MCF 10A (cell line): ENCODE measurements at regions of chr5 and their contacts with region 1.

Region 1: DNA sequence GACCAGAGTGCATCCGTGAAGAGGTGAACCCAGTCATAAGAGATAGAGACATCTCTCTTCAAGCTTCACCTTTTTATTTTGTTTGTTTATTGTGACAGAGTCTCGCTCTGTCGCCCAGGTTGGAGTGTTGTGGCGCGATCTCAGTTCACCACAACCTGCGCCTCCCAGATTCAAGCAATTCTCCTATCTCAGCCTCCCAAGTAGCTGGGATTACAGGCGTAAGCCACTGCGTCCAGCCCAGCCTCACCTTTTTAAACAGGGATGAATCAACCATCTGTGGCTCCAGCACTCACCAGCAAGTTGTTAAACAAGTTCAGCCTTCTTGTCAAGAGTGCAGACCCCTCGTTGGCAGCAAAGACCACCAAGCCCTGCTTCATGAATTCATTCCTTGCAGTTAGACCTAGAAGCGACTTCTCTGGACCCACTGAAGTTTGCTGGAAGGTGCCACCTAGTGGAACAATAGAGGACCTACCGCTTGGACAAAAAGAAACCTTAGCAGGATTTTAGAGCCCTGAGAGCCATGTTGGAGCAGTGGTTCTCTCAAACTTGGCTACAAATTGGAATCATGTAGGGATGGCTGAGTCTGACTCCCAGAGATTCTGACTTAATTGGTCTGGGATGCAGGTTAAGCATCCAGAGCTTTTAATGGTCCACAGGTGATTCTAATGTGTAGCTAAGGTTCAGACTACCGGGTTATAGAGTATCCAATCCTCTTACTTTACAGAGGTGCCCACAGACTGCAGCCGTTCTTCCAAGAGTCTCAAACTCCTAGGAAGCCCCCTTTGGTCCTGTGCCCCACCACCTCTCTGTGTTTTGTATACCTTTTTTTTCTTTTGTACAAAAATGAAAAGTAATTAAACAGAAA is 10.5 kb upstream of the GALNT10 start:
- DNase-seq: peak; percentile 81
- H3K4me3 Mint-ChIP-seq: no peak overlapping the region
- H3K27ac Mint-ChIP-seq: no peak overlapping the region
- H3K4me1 Mint-ChIP-seq: peaks cover 9% of the 10 kb centered on the region
- H3K27me3 Mint-ChIP-seq: peaks cover 41% of the 10 kb centered on the region
- CTCF ChIP-seq: peak; percentile 88

Region 2: GRCh38 chr5:153974131-153974812 is 205.8 kb before region 1 on chr5:
- CTCF ChIA-PET with region 1: interaction called, 30 read pairs
- POLR2A ChIA-PET with region 1: no interaction called
- intact Hi-C with region 1: loop called (anchors 1 kb)
- DNase-seq: peak; percentile 68
- H3K4me3 Mint-ChIP-seq: no peak overlapping the region
- H3K27ac Mint-ChIP-seq: no peak overlapping the region
- H3K4me1 Mint-ChIP-seq: no peaks in the 10 kb centered on the region
- H3K27me3 Mint-ChIP-seq: peaks cover 21% of the 10 kb centered on the region
- CTCF ChIP-seq: peak; percentile 94

Region 3: GRCh38 chr5:154110716-154111115 is 69.4 kb before region 1 on chr5:
- CTCF ChIA-PET with region 1: interaction called, 21 read pairs
- POLR2A ChIA-PET with region 1: no interaction called
- intact Hi-C with region 1: no loop called
- DNase-seq: peak; percentile 11
- H3K4me3 Mint-ChIP-seq: no peak overlapping the region
- H3K27ac Mint-ChIP-seq: no peak overlapping the region
- H3K4me1 Mint-ChIP-seq: no peaks in the 10 kb centered on the region
- H3K27me3 Mint-ChIP-seq: peaks cover 12% of the 10 kb centered on the region
- CTCF ChIP-seq: no peak

Region 4: GRCh38 chr5:154168395-154168794 is 11.7 kb before region 1 on chr5:
- CTCF ChIA-PET with region 1: interaction called, 21 read pairs
- POLR2A ChIA-PET with region 1: interaction called, 3 read pairs
- intact Hi-C with region 1: no loop called
- DNase-seq: no peak
- H3K4me3 Mint-ChIP-seq: no peak overlapping the region
- H3K27ac Mint-ChIP-seq: no peak overlapping the region
- H3K4me1 Mint-ChIP-seq: peaks cover 2% of the 10 kb centered on the region
- H3K27me3 Mint-ChIP-seq: peaks cover 24% of the 10 kb centered on the region
- CTCF ChIP-seq: no peak